ENCODE measurements at regions of chr7 and their contacts with region 1.

Region 1: GRCh38 chr7:94276795-94277194 is 117.9 kb upstream of the COL1A2 start:
- DNase-seq: peak; percentile 46
- ATAC-seq: peak; percentile 66
- H3K4me3 ChIP-seq: no peak overlapping the region
- H3K4me3 Mint-ChIP-seq: no peak overlapping the region
- H3K27ac ChIP-seq: no peak overlapping the region
- H3K27ac Mint-ChIP-seq: no peak overlapping the region
- H3K4me1 ChIP-seq: no peaks in the 10 kb centered on the region
- H3K4me1 Mint-ChIP-seq: no peaks in the 10 kb centered on the region
- H3K27me3 ChIP-seq: peaks cover 0 to 3% (median 0%) of the 10 kb centered on the region in 4 experiments
- H3K27me3 Mint-ChIP-seq: peaks cover 9% of the 10 kb centered on the region
- CTCF ChIP-seq: peak; percentile 58

Region 2: DNA sequence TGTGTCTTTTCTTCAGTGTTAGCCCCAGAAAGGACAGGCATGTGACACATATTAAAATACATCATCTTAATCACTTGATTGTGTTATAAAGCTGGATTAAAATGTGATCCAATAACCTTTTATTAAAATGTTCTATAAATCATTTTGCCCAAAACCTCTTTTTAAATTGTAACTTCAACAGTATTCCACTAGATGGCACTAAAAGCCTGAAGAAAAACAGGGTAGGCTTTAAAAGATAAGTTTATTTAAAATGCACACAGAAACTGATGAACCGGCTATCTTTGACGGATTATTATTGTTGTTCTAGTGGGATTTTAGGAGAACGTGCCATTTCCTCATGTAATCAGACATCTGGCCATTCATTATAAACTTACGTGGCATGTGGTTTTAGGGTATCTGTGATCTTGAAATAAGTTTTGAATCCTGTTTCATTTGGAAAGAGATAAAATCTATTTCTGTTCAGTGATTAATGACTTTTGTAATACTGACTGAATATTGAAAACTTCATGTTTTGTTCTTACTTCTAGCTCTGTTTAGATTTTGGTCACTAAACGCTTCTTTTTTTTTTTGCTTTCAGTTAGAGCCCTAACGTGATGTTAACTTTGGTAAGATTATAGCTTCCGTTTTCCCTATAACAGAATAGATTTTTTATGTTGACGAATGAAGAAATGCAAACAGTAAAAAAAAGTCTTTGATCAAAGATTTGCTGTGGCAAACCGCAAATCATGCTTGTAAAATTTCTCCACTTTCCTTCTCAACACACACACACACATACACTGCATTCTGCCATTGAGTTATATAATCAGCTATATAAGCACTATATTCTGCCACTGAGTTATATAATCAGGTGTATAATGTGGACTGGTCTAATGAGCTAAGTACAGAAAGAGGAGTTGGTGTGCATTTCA is 1031.0 kb before region 1 on chr7:
- CTCF ChIA-PET with region 1: no interaction called
- POLR2A ChIA-PET with region 1: no interaction called
- intact Hi-C with region 1: loop called (anchors 10 kb)
- DNase-seq: peak; percentile 54
- ATAC-seq: peak; percentile 28
- H3K4me3 ChIP-seq: no peak overlapping the region
- H3K4me3 Mint-ChIP-seq: no peak overlapping the region
- H3K27ac ChIP-seq: no peak overlapping the region
- H3K27ac Mint-ChIP-seq: no peak overlapping the region
- H3K4me1 ChIP-seq: no peaks in the 10 kb centered on the region
- H3K4me1 Mint-ChIP-seq: peaks cover 6% of the 10 kb centered on the region
- H3K27me3 ChIP-seq: no peaks in the 10 kb centered on the region
- H3K27me3 Mint-ChIP-seq: no peaks in the 10 kb centered on the region
- CTCF ChIP-seq: peak; percentile 86

Region 3: GRCh38 chr7:93442478-93443224 is 834.1 kb before region 1 on chr7:
- CTCF ChIA-PET with region 1: interaction called, 4 read pairs
- POLR2A ChIA-PET with region 1: no interaction called
- intact Hi-C with region 1: loop called (anchors 2 kb)
- DNase-seq: peak; percentile 56
- ATAC-seq: peak; percentile 47
- H3K4me3 ChIP-seq: no peak overlapping the region
- H3K4me3 Mint-ChIP-seq: no peak overlapping the region
- H3K27ac ChIP-seq: no peak overlapping the region
- H3K27ac Mint-ChIP-seq: no peak overlapping the region
- H3K4me1 ChIP-seq: no peaks in the 10 kb centered on the region
- H3K4me1 Mint-ChIP-seq: no peaks in the 10 kb centered on the region
- H3K27me3 ChIP-seq: no peaks in the 10 kb centered on the region
- H3K27me3 Mint-ChIP-seq: peaks cover 6% of the 10 kb centered on the region
- CTCF ChIP-seq: peak; percentile 79

Region 4: DNA sequence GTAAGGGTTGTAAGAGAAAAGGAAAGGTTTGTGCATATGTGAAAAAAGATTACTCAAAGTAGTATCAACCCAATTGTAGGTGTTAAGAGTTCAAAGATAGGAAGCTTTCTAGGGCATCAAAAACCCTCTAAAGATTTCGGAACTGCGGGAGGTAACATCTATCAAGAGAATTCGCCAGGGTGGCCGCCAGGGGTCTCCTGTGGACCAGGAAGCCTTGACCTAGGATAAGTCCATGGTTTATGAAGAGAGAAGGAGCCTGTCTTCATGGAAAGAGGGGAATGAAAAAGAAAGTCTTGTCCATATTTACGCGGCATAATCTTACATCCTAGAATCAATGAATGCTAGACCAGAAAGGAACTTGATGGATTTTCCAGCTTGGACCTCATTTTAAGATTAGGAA is 561.6 kb before region 1 on chr7:
- CTCF ChIA-PET with region 1: interaction called, 3 read pairs
- POLR2A ChIA-PET with region 1: no interaction called
- intact Hi-C with region 1: loop called (anchors 1 kb)
- DNase-seq: peak; percentile 40
- ATAC-seq: no peak
- H3K4me3 ChIP-seq: no peak overlapping the region
- H3K4me3 Mint-ChIP-seq: no peak overlapping the region
- H3K27ac ChIP-seq: no peak overlapping the region
- H3K27ac Mint-ChIP-seq: no peak overlapping the region
- H3K4me1 ChIP-seq: no peaks in the 10 kb centered on the region
- H3K4me1 Mint-ChIP-seq: no peaks in the 10 kb centered on the region
- H3K27me3 ChIP-seq: peaks cover 0 to 9% (median 0%) of the 10 kb centered on the region in 4 experiments
- H3K27me3 Mint-ChIP-seq: peaks cover 28% of the 10 kb centered on the region
- CTCF ChIP-seq: peak; percentile 46

Region 5: GRCh38 chr7:93799750-93800357 is 476.9 kb before region 1 on chr7:
- CTCF ChIA-PET with region 1: interaction called, 7 read pairs
- POLR2A ChIA-PET with region 1: no interaction called
- intact Hi-C with region 1: loop called (anchors 5 kb)
- DNase-seq: peak; percentile 6
- ATAC-seq: no peak
- H3K4me3 ChIP-seq: no peak overlapping the region
- H3K4me3 Mint-ChIP-seq: no peak overlapping the region
- H3K27ac ChIP-seq: no peak overlapping the region
- H3K27ac Mint-ChIP-seq: no peak overlapping the region
- H3K4me1 ChIP-seq: no peaks in the 10 kb centered on the region
- H3K4me1 Mint-ChIP-seq: no peaks in the 10 kb centered on the region
- H3K27me3 ChIP-seq: no peaks in the 10 kb centered on the region
- H3K27me3 Mint-ChIP-seq: no peaks in the 10 kb centered on the region
- CTCF ChIP-seq: no peak

Region 6: GRCh38 chr7:93902777-93903423 is 373.9 kb before region 1 on chr7:
- CTCF ChIA-PET with region 1: interaction called, 19 read pairs
- POLR2A ChIA-PET with region 1: no interaction called
- intact Hi-C with region 1: loop called (anchors 1 kb)
- DNase-seq: peak; percentile 66
- ATAC-seq: peak; percentile 41
- H3K4me3 ChIP-seq: no peak overlapping the region
- H3K4me3 Mint-ChIP-seq: no peak overlapping the region
- H3K27ac ChIP-seq: no peak overlapping the region
- H3K27ac Mint-ChIP-seq: no peak overlapping the region
- H3K4me1 ChIP-seq: no peaks in the 10 kb centered on the region
- H3K4me1 Mint-ChIP-seq: no peaks in the 10 kb centered on the region
- H3K27me3 ChIP-seq: no peaks in the 10 kb centered on the region
- H3K27me3 Mint-ChIP-seq: peaks cover 25% of the 10 kb centered on the region
- CTCF ChIP-seq: peak; percentile 80